CD8-positive, alpha-beta memory T cell (primary cell): ENCODE measurements at regions of chr6 and their contacts with region 1.

Region 1: GRCh38 chr6:26532699-26533531 is 5.3 kb upstream of the HMGN4 start:
- DNase-seq: peak; percentile 76 to 94 (median 90)
- H3K4me3 ChIP-seq: peak overlapping the region; percentile 82
- H3K4me3 Mint-ChIP-seq: peak overlapping the region; percentile 91 to 98 (median 96)
- H3K27ac ChIP-seq: peak overlapping the region; percentile 68
- H3K27ac Mint-ChIP-seq: peak overlapping the region; percentile 80 to 96 (median 94)
- H3K4me1 ChIP-seq: peaks cover 31% of the 10 kb centered on the region
- H3K4me1 Mint-ChIP-seq: peaks cover 45 to 59% (median 47%) of the 10 kb centered on the region in 3 donors
- H3K27me3 ChIP-seq: no peaks in the 10 kb centered on the region
- H3K27me3 Mint-ChIP-seq: peaks cover 0 to 18% of the 10 kb centered on the region in 2 donors

Region 2: GRCh38 chr6:26473758-26474438 is 59.0 kb before region 1 on chr6:
- CTCF ChIA-PET with region 1: interaction called, 4 read pairs
- POLR2A ChIA-PET with region 1: interaction called, 24 read pairs
- DNase-seq: peak; percentile 66 to 91 (median 90)
- H3K4me3 ChIP-seq: peak overlapping the region; percentile 72
- H3K4me3 Mint-ChIP-seq: peak overlapping the region; percentile 95 to 99 (median 98)
- H3K27ac ChIP-seq: peak overlapping the region; percentile 94
- H3K27ac Mint-ChIP-seq: peak overlapping the region; percentile 90 to 100 (median 100)
- H3K4me1 ChIP-seq: peaks cover 51% of the 10 kb centered on the region
- H3K4me1 Mint-ChIP-seq: peaks cover 44 to 61% (median 58%) of the 10 kb centered on the region in 3 donors
- H3K27me3 ChIP-seq: no peaks in the 10 kb centered on the region
- H3K27me3 Mint-ChIP-seq: no peaks in the 10 kb centered on the region

Region 3: GRCh38 chr6:26520853-26521599 is 11.9 kb before region 1 on chr6:
- CTCF ChIA-PET with region 1: interaction called, 25 read pairs
- POLR2A ChIA-PET with region 1: interaction called, 43 read pairs
- DNase-seq: peak; percentile 81 to 92 (median 87)
- H3K4me3 ChIP-seq: peak overlapping the region; percentile 57
- H3K4me3 Mint-ChIP-seq: peak overlapping the region; percentile 76 to 97 (median 88)
- H3K27ac ChIP-seq: peak overlapping the region; percentile 84
- H3K27ac Mint-ChIP-seq: peak overlapping the region; percentile 81 to 97 (median 94)
- H3K4me1 ChIP-seq: peaks cover 7% of the 10 kb centered on the region
- H3K4me1 Mint-ChIP-seq: peaks cover 31 to 44% (median 33%) of the 10 kb centered on the region in 3 donors
- H3K27me3 ChIP-seq: no peaks in the 10 kb centered on the region
- H3K27me3 Mint-ChIP-seq: peaks cover 0 to 7% of the 10 kb centered on the region in 2 donors

Region 4: DNA sequence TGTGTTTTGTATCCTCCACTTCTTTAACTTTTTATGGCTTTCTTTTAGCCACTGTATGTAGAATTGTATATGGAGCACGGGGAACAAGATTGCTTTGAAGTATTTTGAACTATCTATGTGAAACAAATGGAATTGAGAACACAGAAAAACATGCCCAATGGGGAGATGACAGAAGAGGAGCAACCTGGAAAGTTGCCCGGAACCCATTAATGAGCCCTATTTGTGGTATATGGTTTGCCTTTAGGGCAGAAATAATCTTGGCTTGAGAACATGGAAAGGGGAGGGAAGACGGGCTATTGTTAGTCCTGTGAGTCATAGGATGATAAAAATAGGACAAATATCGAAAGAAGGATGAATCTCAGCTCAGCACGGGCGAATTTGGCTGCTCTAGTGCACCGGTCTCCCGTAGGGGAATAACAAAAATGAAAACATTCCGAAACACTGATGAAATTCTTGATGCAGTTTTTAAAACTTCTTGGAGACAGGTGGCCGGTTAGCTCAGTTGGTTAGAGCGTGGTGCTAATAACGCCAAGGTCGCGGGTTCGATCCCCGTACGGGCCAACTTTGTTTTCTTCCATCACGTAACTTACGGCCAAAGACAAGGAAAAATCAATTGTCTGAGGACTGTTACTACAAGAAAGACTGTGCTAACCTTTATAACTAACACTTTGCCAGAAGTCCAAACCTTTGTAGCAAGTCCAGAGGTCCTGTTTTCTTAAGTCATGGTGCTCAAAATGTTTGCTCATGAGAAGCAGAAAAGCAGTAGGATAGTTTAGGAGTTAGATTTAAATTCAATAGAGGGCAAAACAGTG is 20.9 kb after region 1 on chr6:
- CTCF ChIA-PET with region 1: interaction called, 13 read pairs
- POLR2A ChIA-PET with region 1: interaction called, 34 read pairs
- DNase-seq: peak; percentile 49 to 84 (median 82)
- H3K4me3 ChIP-seq: peak overlapping the region; percentile 89
- H3K4me3 Mint-ChIP-seq: no peak overlapping the region
- H3K27ac ChIP-seq: peak overlapping the region; percentile 64
- H3K27ac Mint-ChIP-seq: no peak overlapping the region
- H3K4me1 ChIP-seq: peaks cover 11% of the 10 kb centered on the region
- H3K4me1 Mint-ChIP-seq: peaks cover 20 to 31% (median 29%) of the 10 kb centered on the region in 3 donors
- H3K27me3 ChIP-seq: no peaks in the 10 kb centered on the region
- H3K27me3 Mint-ChIP-seq: peaks cover 0 to 4% of the 10 kb centered on the region in 2 donors